Breast epithelium (tissue), 4 donors: ENCODE measurements at regions of chr12 and their contacts with region 1.

Region 1: GRCh38 chr12:7995266-7995963 is 37.1 kb upstream of the FOXJ2 start:
- DNase-seq: peak; percentile 74 to 85
- H3K4me3 ChIP-seq: no peak overlapping the region
- H3K27ac ChIP-seq: peak overlapping the region; percentile 74 to 75
- H3K4me1 ChIP-seq: no peaks in the 10 kb centered on the region
- H3K27me3 ChIP-seq: no peaks in the 10 kb centered on the region
- CTCF ChIP-seq: peak; percentile 81 to 94 (median 82)
- POLR2A ChIP-seq: no peak

Region 2: DNA sequence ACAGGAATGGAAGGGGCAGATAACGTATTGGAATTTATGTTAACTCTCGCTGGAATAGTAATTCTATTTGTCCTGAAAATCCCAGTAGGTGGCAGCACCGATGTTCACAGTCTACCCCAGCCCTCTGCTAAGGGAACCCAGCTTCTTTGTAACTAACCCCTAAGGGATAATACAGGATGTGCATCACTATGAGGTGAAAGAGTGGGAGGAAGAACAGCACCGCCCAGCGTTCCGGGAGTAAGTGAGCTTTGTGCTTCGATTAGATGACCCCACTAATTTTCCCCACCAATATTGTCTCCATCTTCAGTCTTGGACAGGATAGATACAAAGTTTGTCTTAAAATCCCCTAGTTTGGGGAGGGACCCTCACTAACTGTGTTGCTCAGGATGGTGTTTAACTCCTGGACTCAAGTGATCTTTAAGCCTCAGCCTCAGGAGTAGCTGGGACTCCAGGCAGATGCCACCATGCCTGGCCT is 62.1 kb before region 1 on chr12:
- intact Hi-C with region 1: loop called (anchors 10 kb)
- DNase-seq: peak in 1 of 2 donors; percentile 50
- H3K4me3 ChIP-seq: peak overlapping the region; percentile 54 to 77 (median 65)
- H3K27ac ChIP-seq: peak overlapping the region; percentile 69 to 78
- H3K4me1 ChIP-seq: no peaks in the 10 kb centered on the region
- H3K27me3 ChIP-seq: no peaks in the 10 kb centered on the region
- CTCF ChIP-seq: peak in 2 of 3 donors; percentile 57 to 71
- POLR2A ChIP-seq: peak; percentile 38